Activated CD4-positive, alpha-beta T cell treated with anti-CD3 and anti-CD28 coated beads for 36 hours (primary cell): ENCODE measurements at regions of chr16 and their contacts with region 1.

Region 1: GRCh38 chr16:51886456-51886855 is 660.5 kb downstream of the TOX3 start:
- DNase-seq: no peak
- ATAC-seq: no peak
- H3K4me3 Mint-ChIP-seq: no peak overlapping the region
- H3K27ac Mint-ChIP-seq: no peak overlapping the region
- H3K4me1 Mint-ChIP-seq: no peaks in the 10 kb centered on the region
- H3K27me3 Mint-ChIP-seq: no peaks in the 10 kb centered on the region

Region 2: DNA sequence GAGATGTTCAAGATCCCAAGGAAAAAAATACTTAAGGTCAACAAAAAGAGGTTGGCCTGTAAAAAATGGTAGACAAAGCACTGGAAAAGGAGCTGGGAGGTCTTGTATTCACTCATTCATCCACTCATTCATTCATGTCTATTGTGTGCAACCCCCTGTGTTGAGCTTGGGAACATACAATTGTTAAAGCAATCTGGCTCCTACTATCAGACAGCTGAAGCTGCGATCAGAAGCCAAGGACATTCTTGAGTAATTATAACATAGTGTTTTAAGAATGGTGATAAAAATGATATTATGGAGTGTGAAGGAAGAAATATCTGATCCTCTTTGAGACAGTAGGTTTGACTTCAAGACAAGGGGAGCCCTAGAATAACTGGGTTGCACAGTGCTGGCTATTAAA is 32.9 kb before region 1 on chr16:
- CTCF ChIA-PET with region 1: no interaction called
- POLR2A ChIA-PET with region 1: no interaction called
- intact Hi-C with region 1: loop called in 1 of 2 experiments (anchors 2 kb)
- DNase-seq: no peak
- ATAC-seq: no peak
- H3K4me3 Mint-ChIP-seq: no peak overlapping the region
- H3K27ac Mint-ChIP-seq: no peak overlapping the region
- H3K4me1 Mint-ChIP-seq: no peaks in the 10 kb centered on the region
- H3K27me3 Mint-ChIP-seq: no peaks in the 10 kb centered on the region